CD8-positive, alpha-beta memory T cell (primary cell): ENCODE measurements at regions of chr17 and their contacts with region 1.

Region 1: DNA sequence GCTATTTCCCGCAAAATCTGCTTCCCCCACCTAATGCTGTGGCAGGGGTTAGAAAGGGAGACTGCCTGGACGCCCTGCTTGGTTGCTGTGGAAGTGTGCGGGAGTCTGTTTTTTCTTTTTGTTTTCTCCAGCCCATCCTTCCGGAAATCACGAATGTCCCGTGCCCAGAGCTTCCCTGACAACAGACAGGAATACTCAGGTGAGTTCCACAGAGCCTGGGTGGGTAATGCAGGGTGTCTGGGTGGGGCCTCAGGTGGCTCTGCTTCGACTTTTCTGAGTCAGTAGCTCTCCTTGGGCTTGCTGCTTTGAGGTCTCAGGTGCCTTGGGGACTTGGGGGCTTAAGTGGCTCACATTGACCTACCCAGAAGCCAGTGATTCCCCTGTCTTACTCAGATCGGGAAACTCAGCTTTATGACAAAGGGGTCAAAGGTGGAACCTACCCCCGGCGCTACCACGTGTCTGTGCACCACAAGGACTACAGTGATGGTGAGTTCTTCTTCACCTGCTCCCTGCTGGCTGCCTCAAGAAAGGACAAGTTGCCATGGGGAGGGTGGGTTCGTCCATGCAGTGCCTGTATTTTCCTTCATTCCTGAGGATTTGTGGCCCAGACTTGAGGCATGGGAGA is 11.4 kb downstream of the LIMD2 start:
- DNase-seq: no peak
- H3K4me3 ChIP-seq: no peak overlapping the region
- H3K4me3 Mint-ChIP-seq: no peak overlapping the region
- H3K27ac ChIP-seq: no peak overlapping the region
- H3K27ac Mint-ChIP-seq: peak overlapping the region in 2 of 8 donors; percentile 47 to 59
- H3K4me1 ChIP-seq: no peaks in the 10 kb centered on the region
- H3K4me1 Mint-ChIP-seq: peaks cover 10 to 18% (median 12%) of the 10 kb centered on the region in 3 donors
- H3K27me3 ChIP-seq: no peaks in the 10 kb centered on the region
- H3K27me3 Mint-ChIP-seq: no peaks in the 10 kb centered on the region

Region 2: DNA sequence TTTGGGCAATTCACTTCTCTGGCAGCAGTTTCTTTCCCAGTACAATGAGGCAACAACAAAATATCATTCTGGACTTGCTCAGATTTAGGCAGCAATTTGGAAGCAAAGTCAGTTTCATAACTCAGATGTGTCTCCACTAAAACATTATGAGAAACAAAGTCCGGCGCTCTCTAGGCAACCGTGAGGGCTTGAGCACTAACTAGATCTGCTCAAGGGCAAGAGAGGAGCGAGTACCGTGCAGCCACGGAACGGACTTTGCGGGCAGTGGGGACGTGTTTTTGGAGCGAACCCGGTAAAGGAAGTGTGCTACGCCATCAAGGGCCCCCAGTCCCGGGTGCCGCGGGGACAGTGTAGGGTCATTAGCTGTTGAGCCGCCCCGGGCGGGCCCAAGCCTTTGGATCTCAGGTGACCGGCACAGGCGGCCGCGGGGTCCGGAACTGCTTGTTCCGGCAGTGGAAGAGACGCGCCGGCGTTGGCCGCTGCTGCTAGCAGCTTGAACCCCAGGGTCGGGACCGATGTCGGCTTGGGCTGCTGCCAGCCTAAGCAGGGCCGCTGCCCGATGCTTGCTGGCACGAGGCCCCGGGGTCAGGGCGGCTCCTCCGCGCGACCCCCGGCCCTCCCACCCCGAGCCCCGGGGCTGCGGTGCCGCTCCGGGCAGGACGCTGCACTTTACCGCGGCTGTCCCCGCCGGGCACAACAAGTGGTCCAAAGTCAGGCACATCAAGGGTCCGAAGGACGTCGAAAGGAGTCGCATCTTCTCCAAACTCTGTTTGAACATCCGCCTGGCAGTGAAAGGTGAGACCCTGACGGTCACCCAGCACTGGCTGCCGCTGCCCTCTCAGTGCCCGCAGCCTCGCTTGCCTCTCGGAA is 87.7 kb before region 1 on chr17 and contains the start of gene TACO1:
- CTCF ChIA-PET with region 1: no interaction called
- POLR2A ChIA-PET with region 1: no interaction called
- DNase-seq: peak; percentile 48 to 76 (median 57)
- H3K4me3 ChIP-seq: peak within 1 kb of the TSS; percentile 77
- H3K4me3 Mint-ChIP-seq: peak within 1 kb of the TSS; percentile 92 to 94 (median 93)
- H3K27ac ChIP-seq: peak within 1 kb of the TSS; percentile 75
- H3K27ac Mint-ChIP-seq: peak within 1 kb of the TSS; percentile 77 to 97 (median 96)
- H3K4me1 ChIP-seq: peaks cover 45% of the 10 kb centered on the region
- H3K4me1 Mint-ChIP-seq: peaks cover 39 to 54% (median 50%) of the 10 kb centered on the region in 3 donors
- H3K27me3 ChIP-seq: no peaks in the 10 kb centered on the region
- H3K27me3 Mint-ChIP-seq: no peaks in the 10 kb centered on the region
- total RNA-seq, gene TACO1: 35.9 to 40.0 TPM

Region 3: DNA sequence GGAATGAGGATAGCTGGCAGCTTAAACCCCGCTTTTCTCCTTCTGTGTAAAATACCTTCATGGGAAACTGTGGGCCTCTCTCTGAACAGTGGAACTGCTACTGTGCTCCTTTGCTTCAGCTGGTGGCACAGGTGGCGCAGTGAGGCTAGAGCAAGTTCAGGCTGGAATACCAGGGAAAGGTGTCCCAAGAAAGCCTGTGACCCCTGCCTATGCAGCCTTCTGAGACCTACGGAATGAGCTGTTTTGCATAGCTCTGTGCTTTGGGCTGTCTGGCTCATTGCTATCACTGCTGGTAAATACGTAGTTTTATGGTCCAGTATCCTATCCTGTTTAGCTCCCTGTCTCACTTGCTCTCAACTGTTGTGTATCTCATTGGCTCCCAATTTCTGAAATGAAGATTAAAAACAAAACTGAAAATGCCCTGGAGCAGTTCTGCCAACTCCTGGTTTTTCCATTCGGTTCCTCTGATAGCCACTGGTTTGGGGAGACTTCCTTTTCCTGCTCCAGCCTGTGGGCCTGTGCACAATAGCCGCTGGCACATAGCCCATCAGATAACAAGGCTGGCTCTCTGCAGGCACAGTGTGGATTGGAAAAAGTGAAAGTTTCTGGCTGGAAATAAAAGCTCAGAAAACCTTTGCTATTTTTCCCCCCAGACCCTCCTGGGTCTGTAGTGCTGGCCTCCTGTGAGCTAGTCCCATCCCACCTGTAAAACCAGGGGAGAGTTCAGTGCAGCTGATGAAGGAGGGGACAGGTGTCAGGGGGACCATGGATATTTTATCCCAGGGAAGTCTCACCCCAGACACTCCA is 12.7 kb before region 1 on chr17:
- CTCF ChIA-PET with region 1: no interaction called
- POLR2A ChIA-PET with region 1: no interaction called
- DNase-seq: no peak
- H3K4me3 ChIP-seq: no peak overlapping the region
- H3K4me3 Mint-ChIP-seq: no peak overlapping the region
- H3K27ac ChIP-seq: peak overlapping the region; percentile 24
- H3K27ac Mint-ChIP-seq: peak overlapping the region in 5 of 8 donors; percentile 6 to 75 (median 64)
- H3K4me1 ChIP-seq: no peaks in the 10 kb centered on the region
- H3K4me1 Mint-ChIP-seq: peaks cover 5 to 19% (median 7%) of the 10 kb centered on the region in 3 donors
- H3K27me3 ChIP-seq: no peaks in the 10 kb centered on the region
- H3K27me3 Mint-ChIP-seq: no peaks in the 10 kb centered on the region

Region 4: GRCh38 chr17:63707151-63707550 is 18.6 kb after region 1 on chr17:
- CTCF ChIA-PET with region 1: interaction called, 251 read pairs
- POLR2A ChIA-PET with region 1: interaction called, 270 read pairs
- DNase-seq: peak in 4 of 5 donors; percentile 21 to 67 (median 61)
- H3K4me3 ChIP-seq: peak overlapping the region; percentile 55
- H3K4me3 Mint-ChIP-seq: peak overlapping the region; percentile 79 to 88 (median 84)
- H3K27ac ChIP-seq: peak overlapping the region; percentile 62
- H3K27ac Mint-ChIP-seq: peak overlapping the region; percentile 80 to 99 (median 95)
- H3K4me1 ChIP-seq: peaks cover 86% of the 10 kb centered on the region
- H3K4me1 Mint-ChIP-seq: peaks cover 70 to 85% (median 74%) of the 10 kb centered on the region in 3 donors
- H3K27me3 ChIP-seq: no peaks in the 10 kb centered on the region
- H3K27me3 Mint-ChIP-seq: no peaks in the 10 kb centered on the region

Region 5: GRCh38 chr17:63740464-63741181 is 52.1 kb after region 1 on chr17:
- CTCF ChIA-PET with region 1: no interaction called
- POLR2A ChIA-PET with region 1: no interaction called
- DNase-seq: peak in 1 of 5 donors; percentile 13
- H3K4me3 ChIP-seq: peak overlapping the region; percentile 86
- H3K4me3 Mint-ChIP-seq: peak overlapping the region; percentile 86 to 96 (median 90)
- H3K27ac ChIP-seq: peak overlapping the region; percentile 92
- H3K27ac Mint-ChIP-seq: peak overlapping the region; percentile 93 to 98 (median 94)
- H3K4me1 ChIP-seq: peaks cover 13% of the 10 kb centered on the region
- H3K4me1 Mint-ChIP-seq: peaks cover 17 to 26% (median 22%) of the 10 kb centered on the region in 3 donors
- H3K27me3 ChIP-seq: no peaks in the 10 kb centered on the region
- H3K27me3 Mint-ChIP-seq: peaks cover 0 to 2% of the 10 kb centered on the region in 2 donors

Region 6: DNA sequence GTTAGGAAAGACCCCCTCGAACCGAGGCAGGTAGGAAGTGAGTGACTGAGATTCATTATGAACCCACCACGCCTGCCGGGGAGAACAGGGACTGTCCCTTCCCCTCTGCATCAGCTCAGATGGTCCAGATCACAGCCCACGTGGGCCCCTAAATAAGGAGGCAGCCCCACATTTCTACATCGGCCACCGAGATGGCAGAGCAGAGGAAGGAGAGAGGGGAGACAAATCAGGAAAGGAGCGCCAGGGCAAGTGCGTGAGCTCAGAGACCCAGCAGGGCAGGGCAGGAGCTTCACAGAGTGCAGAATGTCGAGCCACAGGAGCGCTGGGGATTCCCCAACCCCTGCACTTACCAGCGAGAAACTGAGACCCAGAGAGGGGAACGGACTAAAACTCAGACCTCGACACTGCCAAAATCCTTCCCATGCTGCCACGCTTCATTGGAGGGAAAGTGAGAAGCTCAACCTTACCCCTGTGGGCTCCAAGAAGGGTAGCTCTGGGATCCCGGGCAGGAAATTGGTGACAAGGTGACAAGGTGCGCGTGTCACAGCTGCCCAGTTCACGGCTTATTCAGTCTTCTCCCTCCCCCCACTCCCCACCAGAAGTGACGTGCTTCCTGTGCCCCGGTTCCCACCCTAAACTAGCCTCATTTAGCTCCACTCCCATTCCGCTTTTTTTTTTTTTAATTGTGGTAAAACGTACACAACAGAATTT is 331.7 kb after region 1 on chr17 and contains the start of gene ICAM2:
- CTCF ChIA-PET with region 1: no interaction called
- POLR2A ChIA-PET with region 1: no interaction called
- DNase-seq: peak; percentile 90 to 98 (median 96)
- H3K4me3 ChIP-seq: peak within 1 kb of the TSS; percentile 83
- H3K4me3 Mint-ChIP-seq: peak within 1 kb of the TSS; percentile 96 to 100 (median 98)
- H3K27ac ChIP-seq: peak within 1 kb of the TSS; percentile 90
- H3K27ac Mint-ChIP-seq: peak within 1 kb of the TSS; percentile 99 to 100 (median 100)
- H3K4me1 ChIP-seq: peaks cover 82% of the 10 kb centered on the region
- H3K4me1 Mint-ChIP-seq: peaks cover 68 to 90% (median 72%) of the 10 kb centered on the region in 3 donors
- H3K27me3 ChIP-seq: no peaks in the 10 kb centered on the region
- H3K27me3 Mint-ChIP-seq: peaks cover 0 to 5% of the 10 kb centered on the region in 2 donors
- total RNA-seq, gene ICAM2: 77.4 to 80.7 TPM